Astrocyte of the cerebellum (primary cell): ENCODE measurements at regions of chr9 and their contacts with region 1.

Region 1: GRCh38 chr9:15422372-15423230 is at the start of gene SNAPC3:
- DNase-seq: peak; percentile 87
- H3K4me3 ChIP-seq: peak within 1 kb of the TSS; percentile 84
- CTCF ChIP-seq: no peak

Region 2: DNA sequence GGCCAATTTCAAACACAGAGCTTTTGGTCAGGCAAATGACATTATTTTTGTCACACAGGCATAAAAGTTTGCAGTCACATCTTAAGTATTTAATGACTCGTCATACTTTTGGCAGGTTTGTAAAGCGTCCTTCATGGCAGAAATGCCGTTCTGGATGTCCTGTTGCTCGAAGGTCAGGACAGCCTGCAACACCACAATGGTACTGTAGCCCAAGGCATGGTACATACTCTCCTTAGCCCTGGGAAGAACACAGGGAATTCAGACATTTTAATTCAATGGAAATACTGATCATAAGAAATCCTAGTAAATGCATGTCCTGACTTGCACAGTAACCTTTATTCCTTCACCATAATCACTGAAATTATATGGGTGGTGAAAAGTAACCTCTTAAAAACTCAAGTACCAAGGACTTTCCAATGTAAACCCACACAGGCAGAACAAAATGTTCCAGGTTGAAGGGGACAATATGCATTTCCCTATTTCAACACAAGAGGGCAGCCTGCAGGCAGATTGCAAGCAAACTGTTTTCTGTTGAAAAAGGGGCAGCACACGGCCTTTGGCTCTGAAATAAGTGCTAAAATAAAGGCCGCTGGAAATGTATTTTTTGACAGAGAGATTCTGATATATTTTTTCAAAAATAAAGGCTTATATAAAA is 211.3 kb before region 1 on chr9:
- in situ Hi-C with region 1: loop called (anchors 5 kb)
- DNase-seq: peak; percentile 74
- H3K4me3 ChIP-seq: no peak overlapping the region
- CTCF ChIP-seq: peak; percentile 92

Region 3: GRCh38 chr9:15370466-15371447 is 51.8 kb before region 1 on chr9:
- in situ Hi-C with region 1: no loop called
- DNase-seq: no peak
- H3K4me3 ChIP-seq: no peak overlapping the region
- CTCF ChIP-seq: no peak